ENCODE measurements at regions of chr15 and their contacts with region 1.

Region 1: DNA sequence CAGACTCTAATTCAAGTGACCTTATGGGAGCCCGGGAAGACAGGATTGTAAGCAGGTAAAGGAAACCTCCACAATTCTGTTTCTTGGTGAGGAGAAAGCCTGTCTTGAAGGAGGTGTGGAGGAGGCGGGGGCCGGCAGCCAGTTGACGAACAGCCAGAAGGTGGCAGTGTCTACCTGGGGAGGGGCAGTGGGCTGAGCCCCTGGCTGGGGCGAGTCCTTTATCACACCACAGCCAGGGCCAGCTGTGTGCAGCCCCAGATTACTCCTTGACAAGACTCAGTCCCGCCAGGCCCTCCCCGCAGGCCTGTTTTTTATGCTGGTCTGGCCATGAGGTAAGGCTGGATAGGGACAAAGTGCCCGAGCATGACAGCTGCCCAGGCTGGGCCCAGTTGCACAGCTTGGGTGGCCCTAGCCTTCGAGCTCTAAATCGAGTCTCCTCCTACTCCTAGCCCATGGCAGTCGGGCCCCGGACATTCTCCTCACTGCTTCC is 40.9 kb upstream of the IDH2 start:
- DNase-seq: peak; percentile 57
- ATAC-seq: peak; percentile 99
- H3K4me3 ChIP-seq: no peak overlapping the region
- H3K27ac ChIP-seq: no peak overlapping the region; the same call in 1 of the 2 replicates
- H3K4me1 ChIP-seq: peaks cover 0 to 7% of the 10 kb centered on the region in 2 experiments; a peak in 3 of 4 replicates
- H3K27me3 ChIP-seq: no peaks in the 10 kb centered on the region
- CTCF ChIP-seq: peak; percentile 87 to 92 (median 88)
- POLR2A ChIP-seq: no peak
- RAD21 ChIP-seq: peak; percentile 96

Region 2: DNA sequence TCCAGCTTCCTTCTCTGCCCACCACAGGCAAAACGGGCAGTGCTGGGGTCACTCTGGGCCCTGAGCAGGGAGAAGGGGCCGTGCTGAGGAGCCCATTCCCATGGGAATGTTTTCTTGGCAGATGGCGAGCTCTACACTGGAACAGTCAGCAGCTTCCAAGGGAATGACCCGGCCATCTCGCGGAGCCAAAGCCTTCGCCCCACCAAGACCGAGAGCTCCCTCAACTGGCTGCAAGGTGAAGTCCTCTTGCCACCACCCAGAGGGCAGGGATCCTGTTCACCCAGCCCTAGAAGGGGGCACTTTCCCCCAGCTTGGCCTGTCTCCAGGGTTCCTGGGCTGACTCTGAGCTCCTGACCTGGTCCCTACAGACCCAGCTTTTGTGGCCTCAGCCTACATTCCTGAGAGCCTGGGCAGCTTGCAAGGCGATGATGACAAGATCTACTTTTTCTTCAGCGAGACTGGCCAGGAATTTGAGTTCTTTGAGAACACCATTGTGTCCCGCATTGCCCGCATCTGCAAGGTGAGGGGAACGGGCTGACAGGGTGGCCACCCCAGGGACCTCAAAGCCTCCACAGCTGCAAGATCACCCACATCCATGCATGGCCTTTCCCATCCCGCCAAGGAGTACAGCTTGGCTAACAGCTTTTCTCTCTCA is 78.2 kb after region 1 on chr15:
- CTCF ChIA-PET with region 1: interaction called, 19 read pairs
- POLR2A ChIA-PET with region 1: no interaction called
- RAD21 ChIA-PET with region 1: interaction called in 1 of 2 experiments, 6 read pairs
- intact Hi-C with region 1: loop called (anchors 1 kb)
- DNase-seq: no peak
- ATAC-seq: peak; percentile 89
- H3K4me3 ChIP-seq: no peak overlapping the region
- H3K27ac ChIP-seq: no peak overlapping the region; the same call in 1 of the 2 replicates
- H3K4me1 ChIP-seq: peaks cover 0 to 16% of the 10 kb centered on the region in 2 experiments; a peak in 3 of 4 replicates
- H3K27me3 ChIP-seq: no peaks in the 10 kb centered on the region
- CTCF ChIP-seq: peak in 2 of 3 experiments; percentile 70 to 76; a peak in 4 of 6 replicates
- POLR2A ChIP-seq: no peak
- RAD21 ChIP-seq: no peak

Measured in HCT116 (cell line).